Head of caudate nucleus (tissue), 42 donors: ENCODE measurements at regions of chr12 and their contacts with region 1.

Region 1: DNA sequence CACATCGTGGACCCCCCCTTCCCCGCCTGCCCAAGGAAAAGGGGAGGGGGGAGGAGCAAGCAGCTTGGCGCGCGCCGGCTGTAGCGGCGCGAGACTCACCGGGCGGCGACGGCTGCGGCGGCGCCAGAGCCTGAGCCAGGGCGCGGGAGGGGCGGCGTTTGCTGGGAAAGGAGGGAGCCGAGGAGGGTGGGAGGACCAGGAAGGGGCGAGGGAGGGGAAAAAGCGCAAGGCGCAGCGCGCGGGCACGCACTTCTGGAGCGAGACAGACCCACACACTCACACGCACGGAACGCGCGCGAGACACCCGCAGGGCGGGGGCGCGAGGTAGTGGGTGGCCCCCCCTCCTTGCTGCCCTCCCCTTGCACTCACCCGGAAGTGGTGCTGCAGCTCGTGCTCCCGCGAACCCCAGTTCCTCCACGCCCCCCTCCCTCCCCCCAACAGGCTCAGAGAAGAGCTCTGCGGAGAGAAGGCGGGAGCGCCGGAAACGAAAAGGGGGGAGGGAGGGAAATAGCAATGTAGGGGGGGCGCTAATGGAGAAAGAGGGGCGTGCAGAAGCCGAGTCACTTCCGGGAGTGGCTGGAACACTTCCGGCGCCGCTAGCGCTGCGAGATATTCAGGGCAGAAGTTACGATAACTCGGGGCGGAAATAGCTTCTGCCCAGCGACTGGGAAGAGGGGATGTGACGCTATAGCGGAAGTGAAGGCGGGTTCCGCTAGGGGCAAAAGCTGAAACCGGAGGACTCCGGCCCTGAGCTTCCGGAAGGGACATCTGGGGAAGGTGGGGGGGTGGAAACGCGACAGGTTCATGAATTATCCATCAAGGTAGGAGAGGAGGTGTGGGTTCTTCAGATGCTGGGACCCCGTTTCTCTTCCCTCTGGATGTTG is at the start of gene ZNF384:
- DNase-seq: peak; percentile 96 to 100 (median 99)

Region 2: GRCh38 chr12:6613776-6614512 is 75.3 kb before region 1 on chr12:
- intact Hi-C with region 1: loop called (anchors 5 kb)
- DNase-seq: peak; percentile 77 to 97 (median 91)

Region 3: DNA sequence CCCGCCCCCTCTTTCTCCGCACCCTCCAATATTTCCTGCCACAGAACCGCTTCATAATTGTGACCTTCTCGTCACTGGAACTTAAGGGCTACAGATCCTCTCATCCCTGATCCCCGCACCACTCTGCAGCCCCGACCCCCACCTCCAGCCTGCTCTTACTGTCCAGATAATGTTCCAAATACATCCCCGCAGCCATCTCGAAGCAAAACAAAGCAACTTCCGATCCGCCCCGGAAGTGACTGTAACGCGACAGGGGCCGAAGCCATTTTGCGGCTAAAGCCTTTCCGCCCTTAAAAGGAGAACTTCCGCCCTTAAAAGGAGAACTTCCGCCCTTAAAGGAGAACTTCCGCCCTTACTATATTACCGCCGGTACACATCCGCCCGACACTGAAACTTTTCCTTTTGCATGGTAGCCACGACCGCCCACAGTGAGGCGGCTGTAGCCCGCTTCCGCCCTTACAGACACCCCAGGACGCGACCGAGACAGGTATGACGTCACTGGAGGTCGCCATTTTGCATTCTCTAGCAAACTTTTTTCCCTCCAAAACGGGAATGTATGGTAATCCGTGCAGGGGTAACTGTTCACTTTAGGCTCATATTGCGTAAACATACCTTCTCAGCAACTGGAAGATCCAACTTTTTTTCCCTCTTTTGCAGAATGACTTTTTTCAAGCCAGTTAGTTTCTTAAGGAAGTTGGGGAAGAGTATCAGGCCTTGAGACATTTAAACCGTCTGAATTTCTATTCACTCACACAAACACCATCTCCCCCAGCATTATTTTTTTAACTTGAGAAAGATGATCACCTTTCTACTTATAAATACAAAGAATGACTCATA is 26.1 kb before region 1 on chr12 and contains the start of gene ING4:
- intact Hi-C with region 1: loop called (anchors 1 kb)
- DNase-seq: peak; percentile 93 to 100 (median 98)

Region 4: GRCh38 chr12:6723607-6724396 is 34.6 kb after region 1 on chr12 and contains the start of gene COPS7A:
- intact Hi-C with region 1: loop called (anchors 1 kb)
- DNase-seq: peak; percentile 96 to 99 (median 99)